ENCODE measurements at regions of chr6 and their contacts with region 1.

Region 1: GRCh38 chr6:37691904-37692806 is 5.5 kb downstream of the MDGA1 start:
- DNase-seq: no peak
- H3K4me3 ChIP-seq: no peak overlapping the region
- CTCF ChIP-seq: peak; percentile 99

Region 2: GRCh38 chr6:37324131-37325033 is 367.8 kb before region 1 on chr6:
- CTCF ChIA-PET with region 1: interaction called, 44 read pairs
- POLR2A ChIA-PET with region 1: no interaction called
- DNase-seq: no peak
- H3K4me3 ChIP-seq: no peak overlapping the region
- CTCF ChIP-seq: no peak

Region 3: DNA sequence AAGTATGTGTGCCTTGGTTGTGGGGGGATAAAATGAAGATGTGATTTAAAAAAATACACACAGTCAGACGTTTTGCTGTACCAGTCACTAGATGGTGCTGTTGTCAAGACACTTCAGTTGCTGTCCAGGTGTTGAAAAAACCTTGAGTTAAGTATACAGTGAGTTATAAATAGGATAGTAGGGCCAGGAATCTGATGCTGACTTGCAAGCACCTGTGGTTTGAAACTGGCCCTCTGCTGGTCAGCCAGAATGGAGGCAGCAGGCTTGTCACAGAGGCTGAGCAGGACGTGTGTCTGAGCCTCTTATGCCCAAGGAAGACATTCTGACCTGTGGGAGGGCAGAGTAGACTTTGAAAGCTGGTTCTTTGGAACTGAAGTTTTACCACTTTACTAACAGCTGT is 310.6 kb before region 1 on chr6:
- CTCF ChIA-PET with region 1: interaction called, 19 read pairs
- POLR2A ChIA-PET with region 1: no interaction called
- DNase-seq: no peak
- H3K4me3 ChIP-seq: no peak overlapping the region
- CTCF ChIP-seq: peak; percentile 24

Region 4: GRCh38 chr6:37483917-37484785 is 208.0 kb before region 1 on chr6:
- CTCF ChIA-PET with region 1: interaction called, 91 read pairs
- POLR2A ChIA-PET with region 1: no interaction called
- DNase-seq: no peak
- H3K4me3 ChIP-seq: no peak overlapping the region
- CTCF ChIP-seq: peak; percentile 98

Region 5: GRCh38 chr6:37538107-37538506 is 154.0 kb before region 1 on chr6:
- CTCF ChIA-PET with region 1: interaction called, 27 read pairs
- POLR2A ChIA-PET with region 1: no interaction called
- DNase-seq: no peak
- H3K4me3 ChIP-seq: no peak overlapping the region
- CTCF ChIP-seq: peak; percentile 44

Region 6: DNA sequence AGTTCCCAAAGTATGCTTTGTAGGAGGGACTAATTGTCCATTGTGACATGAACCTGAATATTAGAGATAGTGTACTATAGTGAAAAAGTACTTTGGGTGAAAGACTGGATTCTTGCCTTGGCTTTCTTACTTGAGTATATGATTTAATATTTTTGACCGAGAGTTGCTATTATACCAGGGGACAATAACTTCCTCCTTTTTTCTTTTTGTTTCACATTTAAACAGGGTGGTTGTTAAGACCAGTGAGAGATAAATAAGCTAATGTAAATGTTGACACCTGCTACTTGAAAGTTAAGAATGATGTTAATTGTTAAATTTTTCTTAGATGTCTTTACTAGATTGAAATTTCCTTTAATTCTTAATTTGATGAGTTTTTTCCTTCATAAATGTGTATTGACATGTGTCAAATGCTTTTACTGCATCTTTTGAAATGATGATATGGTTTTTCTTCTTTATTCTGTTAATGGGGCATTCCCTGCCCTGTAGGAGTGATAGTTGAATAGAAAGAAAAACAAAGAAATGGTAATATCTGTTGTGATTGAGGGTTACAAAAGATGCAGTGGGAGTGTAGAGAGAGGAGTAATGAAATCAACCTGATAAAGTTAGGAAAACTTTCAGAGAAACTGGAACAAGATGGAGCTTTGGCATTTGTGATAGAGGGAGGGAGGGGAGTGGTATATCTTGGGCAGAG is 175.7 kb after region 1 on chr6:
- CTCF ChIA-PET with region 1: no interaction called
- POLR2A ChIA-PET with region 1: no interaction called
- DNase-seq: no peak
- H3K4me3 ChIP-seq: no peak overlapping the region
- CTCF ChIP-seq: no peak

Region 7: DNA sequence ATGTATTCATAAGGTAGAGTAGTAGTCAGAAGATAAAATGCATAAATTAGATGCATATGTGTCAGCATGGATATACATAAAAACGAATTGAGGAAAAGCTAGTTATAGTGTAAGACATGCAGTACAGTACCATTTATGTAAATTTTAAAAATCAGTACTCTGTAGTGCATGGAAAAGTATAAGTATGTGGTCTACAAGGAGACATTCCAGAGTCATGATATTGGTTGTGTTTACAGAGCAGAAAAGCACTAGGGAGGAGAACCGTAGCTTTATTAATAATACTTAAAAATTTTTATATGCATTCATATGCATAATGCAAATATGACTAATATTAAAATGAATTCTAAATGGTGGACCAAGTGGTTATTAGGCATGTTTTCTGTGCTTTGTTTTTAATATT is 347.3 kb after region 1 on chr6:
- CTCF ChIA-PET with region 1: no interaction called
- POLR2A ChIA-PET with region 1: no interaction called
- DNase-seq: no peak
- H3K4me3 ChIP-seq: no peak overlapping the region
- CTCF ChIP-seq: no peak

Measured in AG04449 (cell line).